ENCODE measurements at regions of chr4 and their contacts with region 1.

Region 1: GRCh38 chr4:41214136-41214824 is at the start of gene APBB2:
- DNase-seq: peak; percentile 88 to 95 (median 93)
- H3K4me3 ChIP-seq: peak within 1 kb of the TSS; percentile 60 to 98 (median 87)
- H3K27ac ChIP-seq: peak within 1 kb of the TSS; percentile 55 to 97 (median 93)
- H3K27me3 ChIP-seq: no peaks in the 10 kb centered on the region
- CTCF ChIP-seq: peak; percentile 37 to 98 (median 94)
- total RNA-seq, gene APBB2: 71.7 to 260 (median 112) TPM

Region 2: DNA sequence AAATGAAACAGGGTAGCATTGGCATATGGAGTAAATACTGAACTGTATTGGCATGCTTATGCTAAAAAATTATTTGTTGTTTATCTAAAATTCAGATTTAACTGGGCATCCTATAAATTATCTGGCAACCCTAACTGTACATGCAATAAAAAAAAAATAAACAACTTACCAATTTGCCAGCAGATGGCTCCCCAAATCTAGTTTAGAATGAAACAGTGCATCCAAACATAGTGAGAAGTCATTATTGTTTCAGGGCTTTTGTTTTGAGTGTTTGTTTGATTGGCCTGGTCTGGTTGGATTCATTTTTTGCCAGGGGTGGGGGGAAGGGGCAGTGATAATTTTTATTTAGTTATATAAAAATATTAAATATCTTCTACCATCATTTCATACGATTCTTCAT is 477.4 kb before region 1 on chr4:
- intact Hi-C with region 1: loop called in 1 of 2 experiments (anchors 10 kb)
- DNase-seq: no peak
- H3K4me3 ChIP-seq: no peak overlapping the region
- H3K27ac ChIP-seq: no peak overlapping the region
- H3K27me3 ChIP-seq: no peaks in the 10 kb centered on the region
- CTCF ChIP-seq: peak in 55 of 56 donors; percentile 30 to 84 (median 62)

Region 3: GRCh38 chr4:40924096-40924792 is 290.0 kb before region 1 on chr4:
- intact Hi-C with region 1: loop called (anchors 1 kb)
- DNase-seq: peak in 9 of 10 donors; percentile 30 to 75 (median 62)
- H3K4me3 ChIP-seq: no peak overlapping the region
- H3K27ac ChIP-seq: peak overlapping the region in 13 of 59 donors; percentile 2 to 58 (median 35)
- H3K27me3 ChIP-seq: no peaks in the 10 kb centered on the region
- CTCF ChIP-seq: peak; percentile 61 to 92 (median 83)

Region 4: GRCh38 chr4:40980318-40980883 is 233.9 kb before region 1 on chr4:
- intact Hi-C with region 1: loop called (anchors 2 to 5 kb)
- DNase-seq: no peak
- H3K4me3 ChIP-seq: no peak overlapping the region
- H3K27ac ChIP-seq: peak overlapping the region in 6 of 59 donors; percentile 4 to 40 (median 22)
- H3K27me3 ChIP-seq: no peaks in the 10 kb centered on the region
- CTCF ChIP-seq: peak in 51 of 56 donors; percentile 19 to 74 (median 46)

Region 5: GRCh38 chr4:41072021-41072777 is 142.1 kb before region 1 on chr4:
- intact Hi-C with region 1: loop called (anchors 2 to 5 kb)
- DNase-seq: peak in 1 of 10 donors; percentile 59
- H3K4me3 ChIP-seq: peak overlapping the region in 1 of 59 donors; percentile 16
- H3K27ac ChIP-seq: peak overlapping the region in 57 of 59 donors; percentile 40 to 90 (median 76)
- H3K27me3 ChIP-seq: no peaks in the 10 kb centered on the region
- CTCF ChIP-seq: peak in 49 of 56 donors; percentile 12 to 73 (median 41)

Region 6: GRCh38 chr4:41143311-41144039 is 70.8 kb before region 1 on chr4:
- intact Hi-C with region 1: loop called (anchors 2 to 5 kb)
- DNase-seq: no peak
- H3K4me3 ChIP-seq: peak overlapping the region in 2 of 59 donors; percentile 5 to 8
- H3K27ac ChIP-seq: peak overlapping the region; percentile 74 to 100 (median 95)
- H3K27me3 ChIP-seq: no peaks in the 10 kb centered on the region
- CTCF ChIP-seq: no peak

Region 7: DNA sequence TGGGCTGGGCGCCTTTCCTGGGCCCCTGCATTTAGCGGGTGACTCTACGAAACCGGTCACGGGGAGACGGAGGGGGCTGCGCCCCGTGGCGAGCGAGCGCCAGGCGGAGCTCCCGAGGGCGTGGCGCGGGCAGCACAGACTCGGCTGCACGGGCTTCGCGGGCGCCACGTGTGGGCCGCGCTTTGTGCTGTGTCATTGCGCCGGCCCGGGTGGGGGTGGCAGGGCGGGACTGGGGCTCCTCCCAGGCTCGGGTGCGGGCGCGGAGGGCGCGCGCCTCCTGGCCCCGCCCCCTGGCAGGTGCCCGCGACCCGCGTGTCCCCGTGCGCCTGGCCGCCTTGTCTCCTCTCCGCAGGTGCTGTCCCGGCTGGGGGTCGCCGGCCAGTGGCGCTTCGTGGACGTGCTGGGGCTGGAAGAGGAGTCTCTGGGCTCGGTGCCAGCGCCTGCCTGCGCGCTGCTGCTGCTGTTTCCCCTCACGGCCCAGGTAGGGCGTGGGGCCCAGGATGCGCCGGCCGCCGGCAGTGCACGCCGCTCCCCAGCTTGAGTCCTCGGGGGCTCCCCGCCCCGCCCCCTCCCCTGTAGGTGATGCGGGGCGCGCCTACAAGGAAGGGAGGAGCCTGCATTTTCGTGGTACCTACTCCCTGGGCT is 43.1 kb after region 1 on chr4:
- intact Hi-C with region 1: loop called in 1 of 2 experiments (anchors 5 kb)
- DNase-seq: peak; percentile 40 to 82 (median 64)
- H3K4me3 ChIP-seq: peak overlapping the region; percentile 45 to 87 (median 77)
- H3K27ac ChIP-seq: peak overlapping the region in 57 of 59 donors; percentile 26 to 97 (median 89)
- H3K27me3 ChIP-seq: peaks cover 0 to 13% (median 0%) of the 10 kb centered on the region in 45 donors
- CTCF ChIP-seq: peak in 4 of 56 donors; percentile 6 to 27 (median 10)

Measured in dorsolateral prefrontal cortex (tissue), 120 donors.